PC-3 (cell line): ENCODE measurements at regions of chr7 and their contacts with region 1.

Region 1: DNA sequence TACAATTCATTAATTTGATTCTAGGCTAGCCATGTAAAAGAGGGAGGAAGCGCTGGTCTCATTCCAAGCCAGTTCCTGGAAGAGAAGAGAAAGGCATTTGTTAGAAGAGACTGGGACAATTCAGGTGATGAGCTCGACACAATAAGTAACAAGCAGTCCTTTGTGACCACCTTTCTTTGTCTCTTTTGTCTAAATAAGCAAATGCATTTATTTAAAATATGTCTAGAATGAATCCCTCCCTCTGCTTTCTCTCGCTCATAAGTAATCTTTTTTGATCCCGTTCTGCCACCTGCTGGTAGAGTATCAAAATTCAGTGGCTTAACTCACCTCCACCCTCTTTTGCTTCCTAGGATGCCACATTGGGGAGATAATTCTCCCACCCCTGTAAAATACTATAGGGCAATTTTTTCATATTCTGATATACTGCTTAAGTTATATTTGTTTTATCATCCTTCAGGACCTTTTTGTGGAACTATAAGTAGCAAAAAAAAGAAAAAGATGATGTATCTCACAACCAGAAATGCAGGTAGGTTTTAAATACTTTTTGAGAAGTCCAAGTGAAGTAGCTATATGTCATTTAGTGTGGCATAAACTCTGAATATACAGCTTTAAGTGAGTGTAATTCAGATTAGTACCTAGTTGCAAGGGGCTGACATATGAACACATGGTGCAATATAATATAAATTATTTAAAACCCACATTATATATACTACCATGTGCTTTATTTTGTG is 91.5 kb downstream of the GSDME start:
- DNase-seq: peak; percentile 71
- ATAC-seq: peak; percentile 45
- H3K4me3 ChIP-seq: no peak overlapping the region
- H3K27ac ChIP-seq: no peak overlapping the region
- H3K4me1 ChIP-seq: peaks cover 21% of the 10 kb centered on the region
- H3K27me3 ChIP-seq: no peaks in the 10 kb centered on the region
- CTCF ChIP-seq: peak; percentile 79

Region 2: DNA sequence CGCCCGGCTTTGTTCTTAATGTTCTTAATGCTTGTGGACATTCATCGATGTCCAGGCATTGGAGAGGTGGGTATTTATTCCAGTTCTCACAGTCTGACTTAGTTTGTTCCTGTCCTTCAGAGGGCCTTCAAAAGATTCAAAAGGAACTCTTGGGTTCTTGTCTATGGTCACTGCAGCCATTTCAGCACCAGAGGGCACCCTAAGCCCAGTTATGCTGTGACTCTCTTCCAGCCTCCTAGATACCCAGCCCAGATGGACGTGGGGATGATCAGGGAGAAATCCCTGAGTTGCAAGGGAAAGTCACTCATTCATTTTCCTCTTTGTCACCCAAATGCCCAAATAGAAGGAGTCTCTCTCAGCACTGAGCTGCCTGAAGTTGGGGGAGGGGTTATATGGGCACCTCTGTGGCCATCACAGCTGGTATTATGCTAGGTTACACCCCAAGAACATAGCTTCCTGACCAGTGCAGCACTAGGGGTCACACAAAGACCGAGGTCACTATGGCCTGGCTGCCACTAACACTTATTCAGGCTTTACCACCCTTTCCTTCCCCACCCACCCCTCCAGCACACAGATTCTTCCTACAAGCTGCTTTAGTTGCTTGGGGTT is 1095.0 kb before region 1 on chr7:
- CTCF ChIA-PET with region 1: no interaction called
- POLR2A ChIA-PET with region 1: no interaction called
- intact Hi-C with region 1: loop called (anchors 5 kb)
- DNase-seq: peak; percentile 86
- ATAC-seq: peak; percentile 99
- H3K4me3 ChIP-seq: no peak overlapping the region
- H3K27ac ChIP-seq: no peak overlapping the region
- H3K4me1 ChIP-seq: no peaks in the 10 kb centered on the region
- H3K27me3 ChIP-seq: no peaks in the 10 kb centered on the region
- CTCF ChIP-seq: peak; percentile 93

Region 3: DNA sequence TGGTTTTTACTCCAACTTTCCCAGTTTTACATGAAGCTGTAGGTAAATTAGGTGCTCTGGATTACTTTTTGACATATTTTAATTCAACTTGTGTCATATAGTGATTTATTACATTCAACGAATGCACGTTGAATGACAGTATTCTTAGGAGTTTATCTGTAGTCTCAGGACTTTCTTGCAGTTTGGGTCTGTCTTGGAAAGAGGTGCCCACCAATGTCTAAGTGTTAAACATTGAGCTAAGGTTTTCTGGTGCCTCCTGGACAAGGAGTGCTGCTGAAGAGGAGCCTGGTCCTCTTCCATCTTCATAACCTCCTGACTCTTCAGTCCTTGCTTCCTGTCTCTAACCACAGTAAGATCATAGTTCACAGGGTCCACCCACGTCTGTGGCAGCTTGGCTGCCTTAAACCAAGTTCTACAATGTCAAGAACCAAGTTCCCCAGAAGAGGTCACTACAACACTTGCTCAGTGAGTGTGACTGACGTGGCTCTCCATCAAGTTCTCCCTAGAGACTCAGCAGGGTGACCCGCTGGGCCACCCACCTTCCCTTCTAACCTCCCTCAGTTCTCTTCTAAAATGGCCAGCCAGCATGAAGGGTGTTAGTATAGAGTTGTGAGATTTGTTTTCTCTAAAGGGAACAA is 375.6 kb before region 1 on chr7:
- CTCF ChIA-PET with region 1: no interaction called
- POLR2A ChIA-PET with region 1: no interaction called
- intact Hi-C with region 1: loop called (anchors 2 kb)
- DNase-seq: peak; percentile 71
- ATAC-seq: peak; percentile 92
- H3K4me3 ChIP-seq: no peak overlapping the region
- H3K27ac ChIP-seq: no peak overlapping the region
- H3K4me1 ChIP-seq: no peaks in the 10 kb centered on the region
- H3K27me3 ChIP-seq: peaks cover 59% of the 10 kb centered on the region
- CTCF ChIP-seq: peak; percentile 64

Region 4: DNA sequence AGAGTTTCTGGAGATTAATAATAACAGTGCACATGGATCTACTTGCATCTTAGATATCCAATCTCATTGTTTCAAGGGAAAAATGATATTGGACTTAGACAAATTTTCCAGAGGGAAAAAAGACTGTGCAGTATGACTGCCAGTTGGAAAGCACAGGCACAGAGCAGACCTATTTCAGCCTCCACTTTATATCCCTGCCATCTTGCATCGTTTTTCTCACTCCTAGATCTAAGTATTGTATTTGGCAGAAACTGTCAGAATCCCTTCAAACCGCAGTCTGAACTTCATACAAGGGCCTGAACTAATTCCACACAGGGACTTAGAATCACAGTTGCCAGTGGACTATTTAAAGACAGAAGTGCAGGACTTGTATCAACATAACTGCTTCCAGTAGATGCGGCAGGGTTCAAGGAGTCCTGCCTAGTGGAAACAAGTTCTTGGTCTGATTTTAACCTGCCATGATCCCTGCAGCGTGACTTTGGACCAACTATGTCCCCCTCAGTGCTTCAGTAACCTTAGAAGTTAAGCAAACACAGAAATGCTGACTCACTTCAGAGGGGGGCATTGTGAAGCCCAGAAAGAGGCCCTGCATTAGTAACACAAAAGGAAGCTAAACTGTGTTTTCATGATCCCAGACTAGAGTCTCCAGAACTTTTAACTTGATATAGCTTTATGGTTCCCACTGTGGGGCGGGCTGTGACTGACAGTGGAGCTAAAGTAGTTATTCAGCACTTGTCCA is 188.2 kb before region 1 on chr7:
- CTCF ChIA-PET with region 1: no interaction called
- POLR2A ChIA-PET with region 1: no interaction called
- intact Hi-C with region 1: loop called (anchors 10 kb)
- DNase-seq: peak; percentile 76
- ATAC-seq: peak; percentile 95
- H3K4me3 ChIP-seq: no peak overlapping the region
- H3K27ac ChIP-seq: peak overlapping the region; percentile 42
- H3K4me1 ChIP-seq: peaks cover 16% of the 10 kb centered on the region
- H3K27me3 ChIP-seq: peaks cover 15% of the 10 kb centered on the region; the same call in 1 of the 2 replicates
- CTCF ChIP-seq: no peak

Region 5: GRCh38 chr7:24637706-24638105 is 28.0 kb before region 1 on chr7:
- CTCF ChIA-PET with region 1: no interaction called
- POLR2A ChIA-PET with region 1: no interaction called
- intact Hi-C with region 1: no loop called
- DNase-seq: no peak
- ATAC-seq: no peak
- H3K4me3 ChIP-seq: no peak overlapping the region
- H3K27ac ChIP-seq: no peak overlapping the region
- H3K4me1 ChIP-seq: no peaks in the 10 kb centered on the region
- H3K27me3 ChIP-seq: no peaks in the 10 kb centered on the region
- CTCF ChIP-seq: no peak

Region 6: DNA sequence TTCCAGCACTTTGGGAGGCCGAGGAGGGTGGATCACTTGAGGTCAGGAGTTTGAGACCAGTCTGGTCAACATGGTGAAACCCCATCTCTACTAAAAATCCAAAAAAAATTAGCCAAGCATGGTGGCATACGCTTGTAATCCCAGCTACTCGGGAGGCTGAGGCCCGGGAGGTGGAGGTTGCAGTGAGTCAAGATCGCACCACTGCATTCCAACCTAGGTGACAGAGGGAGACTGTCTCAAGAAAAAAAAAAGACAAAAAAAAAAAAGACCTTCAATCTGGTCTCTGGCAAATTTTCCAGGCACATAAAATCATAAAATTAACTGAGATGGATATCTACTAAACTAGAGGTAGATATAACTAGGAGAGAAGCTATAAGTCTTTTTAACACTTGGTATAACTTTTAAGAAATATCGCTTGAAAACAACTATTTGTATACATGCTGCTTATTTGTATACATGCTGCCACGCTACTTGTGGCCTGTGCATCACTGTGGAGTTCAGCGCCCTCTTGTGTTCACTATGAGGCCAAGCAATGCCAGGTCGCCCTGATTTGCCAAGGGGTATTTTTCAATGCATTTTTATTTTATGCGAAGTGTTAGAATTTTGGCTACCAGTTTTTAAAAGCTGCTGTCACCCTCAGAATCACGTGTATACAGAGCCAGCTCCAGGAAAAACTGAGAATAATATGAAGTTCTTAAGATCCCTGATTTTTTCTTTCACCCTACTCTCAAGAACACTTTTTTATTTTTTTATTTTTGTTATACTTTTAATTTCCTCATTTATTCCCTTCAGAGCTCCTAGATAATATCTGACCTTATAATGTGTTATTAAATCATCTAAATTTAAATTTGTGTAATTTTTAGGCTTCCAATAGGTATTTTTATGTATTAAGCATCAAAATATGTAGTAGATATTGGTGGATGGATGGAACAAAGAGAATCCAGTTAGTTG is 432.6 kb after region 1 on chr7:
- CTCF ChIA-PET with region 1: no interaction called
- POLR2A ChIA-PET with region 1: no interaction called
- intact Hi-C with region 1: loop called (anchors 5 kb)
- DNase-seq: peak; percentile 76
- ATAC-seq: peak; percentile 80
- H3K4me3 ChIP-seq: peak overlapping the region; percentile 41; the same call in 1 of the 2 replicates
- H3K27ac ChIP-seq: no peak overlapping the region
- H3K4me1 ChIP-seq: no peaks in the 10 kb centered on the region
- H3K27me3 ChIP-seq: no peaks in the 10 kb centered on the region
- CTCF ChIP-seq: peak; percentile 93